ENCODE measurements at regions of chr10 and their contacts with region 1.

Region 1: DNA sequence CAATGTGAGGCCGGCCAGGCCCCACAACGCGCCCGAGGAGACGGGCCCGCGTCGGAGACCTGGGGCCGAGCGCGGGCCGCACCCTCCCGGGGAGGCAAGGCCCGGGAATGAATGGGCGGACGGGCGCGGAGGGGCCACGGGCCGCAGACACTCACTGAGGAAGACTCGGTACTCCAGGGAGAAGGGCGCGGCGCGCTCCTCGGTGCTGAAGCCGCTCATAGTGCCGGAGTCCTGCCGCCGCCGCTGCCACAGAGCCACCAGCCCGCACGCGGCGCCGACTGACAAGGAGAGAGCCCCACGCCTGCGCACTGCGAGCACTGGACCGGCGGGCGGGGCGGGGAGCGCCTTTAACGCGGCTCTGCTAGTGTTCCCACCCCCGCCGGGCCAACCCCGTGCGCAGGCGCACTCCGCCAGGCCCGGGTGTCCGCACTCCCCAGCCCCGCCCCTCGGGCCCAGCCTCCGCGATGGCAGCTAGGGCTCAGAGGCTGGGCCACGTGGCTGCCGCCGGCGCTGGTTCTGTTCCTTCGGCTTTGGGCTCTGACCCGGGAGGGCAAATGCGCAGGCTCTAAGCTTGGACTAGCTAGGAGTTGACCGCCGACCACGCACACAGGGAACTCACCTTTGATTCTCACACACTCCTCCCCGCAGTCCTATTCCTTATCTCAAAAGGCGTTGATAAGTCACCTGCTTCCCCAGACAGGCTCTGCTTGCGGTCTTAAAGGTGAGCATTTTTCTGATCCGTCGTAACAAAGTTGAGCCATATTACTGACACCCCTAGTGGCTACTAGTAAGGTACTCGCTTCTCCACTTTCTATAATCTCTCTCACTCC is at the start of gene PPA1:
- DNase-seq: peak; percentile 99 to 100
- H3K4me3 ChIP-seq: peak within 1 kb of the TSS; percentile 85
- H3K4me3 Mint-ChIP-seq: peak within 1 kb of the TSS; percentile 76
- H3K27ac Mint-ChIP-seq: peak within 1 kb of the TSS; percentile 99
- H3K4me1 ChIP-seq: peaks cover 19% of the 10 kb centered on the region
- H3K4me1 Mint-ChIP-seq: peaks cover 19% of the 10 kb centered on the region
- H3K27me3 ChIP-seq: no peaks in the 10 kb centered on the region
- H3K27me3 Mint-ChIP-seq: no peaks in the 10 kb centered on the region
- CTCF ChIP-seq: peak; percentile 56 to 81
- total RNA-seq, gene PPA1: 350 and 353 TPM in 2 replicates

Region 2: GRCh38 chr10:70289739-70290138 is 56.4 kb after region 1 on chr10:
- CTCF ChIA-PET with region 1: no interaction called
- POLR2A ChIA-PET with region 1: no interaction called
- intact Hi-C with region 1: loop called (anchors 1 kb)
- DNase-seq: no peak
- H3K4me3 ChIP-seq: no peak overlapping the region
- H3K4me3 Mint-ChIP-seq: no peak overlapping the region
- H3K27ac Mint-ChIP-seq: peak overlapping the region; percentile 68
- H3K4me1 ChIP-seq: peaks cover 13% of the 10 kb centered on the region
- H3K4me1 Mint-ChIP-seq: peaks cover 8% of the 10 kb centered on the region
- H3K27me3 ChIP-seq: no peaks in the 10 kb centered on the region
- H3K27me3 Mint-ChIP-seq: no peaks in the 10 kb centered on the region
- CTCF ChIP-seq: no peak

Region 3: DNA sequence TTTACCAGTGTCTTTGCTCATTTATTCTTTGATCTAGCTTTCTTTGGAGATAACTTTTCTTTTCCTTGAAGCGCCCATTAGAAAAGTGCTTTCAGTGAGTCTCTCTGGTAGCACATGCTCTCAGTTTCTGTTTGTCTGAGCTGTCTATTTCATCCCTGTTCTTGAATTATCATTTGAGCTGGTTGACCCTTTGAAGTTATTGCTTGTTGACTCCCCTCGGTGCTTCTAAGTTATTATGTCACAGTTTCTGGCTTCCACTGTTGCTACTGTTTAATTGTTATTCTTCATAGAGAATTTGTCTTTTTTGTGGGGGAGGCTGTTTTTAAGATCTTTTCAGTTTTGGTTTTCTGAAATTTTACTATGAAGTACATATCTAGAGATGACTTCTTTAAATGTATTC is 380.6 kb after region 1 on chr10:
- CTCF ChIA-PET with region 1: no interaction called
- POLR2A ChIA-PET with region 1: interaction called, 11 read pairs
- intact Hi-C with region 1: no loop called
- DNase-seq: no peak
- H3K4me3 ChIP-seq: no peak overlapping the region
- H3K4me3 Mint-ChIP-seq: no peak overlapping the region
- H3K27ac Mint-ChIP-seq: no peak overlapping the region
- H3K4me1 ChIP-seq: no peaks in the 10 kb centered on the region
- H3K4me1 Mint-ChIP-seq: no peaks in the 10 kb centered on the region
- H3K27me3 ChIP-seq: no peaks in the 10 kb centered on the region
- H3K27me3 Mint-ChIP-seq: peaks cover 20% of the 10 kb centered on the region
- CTCF ChIP-seq: no peak

Region 4: GRCh38 chr10:71010730-71011129 is 777.4 kb after region 1 on chr10:
- CTCF ChIA-PET with region 1: no interaction called
- POLR2A ChIA-PET with region 1: no interaction called
- intact Hi-C with region 1: no loop called
- DNase-seq: no peak
- H3K4me3 ChIP-seq: no peak overlapping the region
- H3K4me3 Mint-ChIP-seq: no peak overlapping the region
- H3K27ac Mint-ChIP-seq: no peak overlapping the region
- H3K4me1 ChIP-seq: no peaks in the 10 kb centered on the region
- H3K4me1 Mint-ChIP-seq: no peaks in the 10 kb centered on the region
- H3K27me3 ChIP-seq: no peaks in the 10 kb centered on the region; the same call in 1 of the 2 replicates
- H3K27me3 Mint-ChIP-seq: peaks cover 21% of the 10 kb centered on the region
- CTCF ChIP-seq: peak in 1 of 2 experiments; percentile 32

Measured in Caco-2 (cell line).